Endothelial cell of umbilical vein (primary cell): ENCODE measurements at regions of chr14 and their contacts with region 1.

Region 1: DNA sequence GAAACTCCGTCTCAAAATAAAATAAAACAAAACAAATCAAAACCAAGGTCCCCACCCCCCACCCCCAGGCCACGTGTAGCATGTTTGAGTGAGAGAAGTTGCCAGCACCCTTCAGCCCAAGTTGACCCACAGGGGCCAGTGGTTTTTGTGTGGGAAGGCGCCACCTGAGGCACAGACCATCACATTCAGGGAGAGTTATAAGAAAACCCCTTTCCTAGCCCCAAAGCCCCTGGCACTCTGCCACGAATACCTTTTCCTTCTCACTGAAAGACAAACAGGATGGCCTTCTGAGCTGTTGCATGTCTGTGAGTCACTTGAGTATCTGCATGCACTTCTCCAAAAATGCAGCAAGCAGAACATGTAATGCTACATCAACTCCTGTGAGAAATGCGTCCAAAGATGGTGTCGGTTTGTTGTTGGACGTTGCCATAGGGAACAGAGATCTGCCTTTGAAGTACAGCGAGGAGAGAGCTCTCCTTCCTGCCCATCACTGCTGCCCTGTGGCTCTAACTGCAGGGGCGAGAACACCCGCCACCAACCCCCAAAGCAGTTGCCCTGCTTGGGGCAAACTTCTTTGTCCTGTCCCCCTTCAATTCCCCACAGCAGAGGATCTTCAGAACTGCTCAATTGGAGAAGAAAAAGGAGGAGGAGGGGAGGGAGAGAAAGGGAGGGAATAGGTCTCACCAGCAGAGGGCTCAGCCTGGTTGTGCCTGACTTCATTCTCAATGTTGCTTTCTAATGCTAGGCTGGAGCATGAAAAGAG is 2.7 kb upstream of the TRAF3 start:
- DNase-seq: peak; percentile 69
- H3K4me3 ChIP-seq: no peak overlapping the region
- H3K27ac ChIP-seq: no peak overlapping the region
- H3K4me1 ChIP-seq: peaks cover 16% of the 10 kb centered on the region
- H3K27me3 ChIP-seq: no peaks in the 10 kb centered on the region
- CTCF ChIP-seq: peak; percentile 66 to 86
- POLR2A ChIP-seq: no peak

Region 2: GRCh38 chr14:102917469-102918211 is 143.1 kb after region 1 on chr14:
- CTCF ChIA-PET with region 1: interaction called, 5 read pairs
- POLR2A ChIA-PET with region 1: no interaction called
- dilution Hi-C with region 1: no loop called
- intact Hi-C with region 1: loop called (anchors 1 kb)
- DNase-seq: peak; percentile 47
- H3K4me3 ChIP-seq: no peak overlapping the region
- H3K27ac ChIP-seq: no peak overlapping the region
- H3K4me1 ChIP-seq: no peaks in the 10 kb centered on the region
- H3K27me3 ChIP-seq: peaks cover 7 to 8% of the 10 kb centered on the region in 2 experiments
- CTCF ChIP-seq: peak; percentile 72 to 78
- POLR2A ChIP-seq: no peak